ENCODE measurements at regions of chr5 and their contacts with region 1.

Region 1: GRCh38 chr5:6745706-6746222 is 32.5 kb downstream of the TENT4A start:
- DNase-seq: peak; percentile 21
- H3K4me3 ChIP-seq: no peak overlapping the region
- H3K27ac ChIP-seq: no peak overlapping the region
- H3K27me3 ChIP-seq: no peaks in the 10 kb centered on the region
- CTCF ChIP-seq: peak; percentile 93

Region 2: GRCh38 chr5:6616632-6617031 is 129.1 kb before region 1 on chr5:
- CTCF ChIA-PET with region 1: interaction called, 41 read pairs
- POLR2A ChIA-PET with region 1: no interaction called
- DNase-seq: no peak
- H3K4me3 ChIP-seq: no peak overlapping the region
- H3K27ac ChIP-seq: no peak overlapping the region
- H3K27me3 ChIP-seq: no peaks in the 10 kb centered on the region
- CTCF ChIP-seq: no peak

Region 3: DNA sequence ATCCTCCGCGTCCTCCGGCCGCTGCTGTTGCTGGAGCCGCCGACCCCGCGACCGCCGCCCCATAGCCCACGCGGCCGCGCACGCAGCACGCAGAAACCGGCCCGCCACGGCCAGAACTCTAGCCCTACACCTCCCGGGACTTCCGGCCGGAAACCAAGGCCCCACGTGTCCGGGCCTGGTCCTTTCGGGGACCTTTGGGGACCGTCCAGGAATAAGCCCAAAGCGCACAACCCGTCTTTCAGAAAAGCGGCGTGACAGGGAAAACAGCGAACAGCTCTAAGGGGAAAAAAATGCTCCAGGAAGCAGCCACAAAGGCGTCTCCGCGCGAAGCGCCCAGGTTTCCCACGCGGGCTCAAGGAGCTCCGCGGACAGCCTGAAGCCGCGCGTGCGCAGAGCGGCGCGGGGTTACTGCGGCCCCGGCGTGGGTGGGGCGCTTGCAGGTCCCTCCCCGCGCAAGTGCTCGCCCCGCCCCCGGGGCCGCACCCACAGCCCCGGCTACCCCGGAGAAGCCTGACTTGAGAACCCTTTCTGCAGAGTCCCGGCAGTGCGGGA is 112.8 kb before region 1 on chr5 and contains the starts of genes NSUN2 and SRD5A1:
- CTCF ChIA-PET with region 1: interaction called, 35 read pairs
- POLR2A ChIA-PET with region 1: interaction called, 5 read pairs
- DNase-seq: peak; percentile 76
- H3K4me3 ChIP-seq: peak within 1 kb of the TSS; percentile 91
- H3K27ac ChIP-seq: peak within 1 kb of the TSS; percentile 95
- H3K27me3 ChIP-seq: no peaks in the 10 kb centered on the region
- CTCF ChIP-seq: no peak
- polyA plus RNA-seq, gene NSUN2: 41.5 and 42.0 TPM in 2 replicates
- polyA plus RNA-seq, gene SRD5A1: 19.7 and 20.7 TPM in 2 replicates

Region 4: DNA sequence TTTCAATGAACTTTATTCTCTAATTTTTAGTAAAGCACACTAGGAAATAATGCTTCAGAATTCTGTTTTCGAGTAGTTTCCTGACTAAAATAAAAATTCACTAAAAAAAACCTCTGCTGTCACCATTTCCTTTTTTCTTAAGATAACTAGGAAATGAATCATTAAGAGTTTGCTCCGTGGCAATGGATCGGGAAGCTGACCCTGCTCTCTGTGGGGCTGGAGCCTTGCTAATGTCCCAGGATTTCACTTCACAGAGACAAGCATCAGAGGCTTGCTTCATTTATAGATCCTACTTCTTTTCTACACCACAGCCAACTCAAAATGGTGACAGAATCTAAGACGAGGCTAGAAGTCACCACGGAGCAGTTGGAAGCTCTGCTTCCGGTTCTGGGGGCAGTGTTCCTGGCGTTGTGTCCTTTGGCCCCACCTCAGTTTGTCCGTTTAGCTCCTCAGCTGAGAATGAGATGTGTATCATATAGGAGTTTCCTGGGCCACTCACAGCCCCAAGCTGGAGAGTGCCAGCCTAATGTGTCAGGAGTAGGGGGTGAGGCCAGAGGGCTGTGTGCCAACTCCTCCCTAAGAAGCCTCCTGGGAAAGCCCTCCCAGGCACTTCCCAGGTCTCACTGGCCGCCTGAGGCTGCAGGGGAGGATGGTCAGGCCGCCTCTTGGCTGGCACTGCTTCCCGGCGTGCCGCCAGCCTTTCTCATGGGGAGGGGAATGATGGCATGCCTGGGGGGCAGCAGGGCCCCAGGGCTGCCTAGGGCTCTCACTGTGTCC is 12.9 kb before region 1 on chr5:
- CTCF ChIA-PET with region 1: interaction called, 24 read pairs
- POLR2A ChIA-PET with region 1: no interaction called
- DNase-seq: no peak
- H3K4me3 ChIP-seq: peak overlapping the region; percentile 39
- H3K27ac ChIP-seq: peak overlapping the region; percentile 97
- H3K27me3 ChIP-seq: no peaks in the 10 kb centered on the region
- CTCF ChIP-seq: no peak

Measured in AG04450 (cell line).